Ovary (tissue), 10 donors: ENCODE measurements at regions of chr1 and their contacts with region 1.

Region 1: DNA sequence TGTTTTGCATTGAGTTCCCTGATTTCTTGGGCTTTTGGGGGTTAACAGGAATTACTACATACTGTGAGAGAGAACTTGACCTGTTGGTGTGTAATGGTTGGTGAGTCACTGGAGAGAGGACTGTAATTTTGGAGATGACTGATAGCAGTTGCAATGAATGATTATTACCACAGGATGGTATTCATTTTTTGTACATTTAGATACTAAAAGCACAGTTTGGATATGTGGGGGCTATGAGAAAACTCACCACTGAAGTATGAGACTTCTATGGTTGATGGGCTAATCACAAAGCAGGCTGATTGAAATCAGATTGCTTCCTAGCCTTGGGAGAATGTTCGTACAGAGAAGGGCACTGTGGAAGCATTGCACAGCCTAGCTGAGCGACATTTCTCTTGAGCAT is 1571.3 kb upstream of the PRMT6 start:
- DNase-seq: no peak
- H3K4me3 ChIP-seq: no peak overlapping the region
- H3K27ac ChIP-seq: no peak overlapping the region
- H3K4me1 ChIP-seq: no peaks in the 10 kb centered on the region
- H3K27me3 ChIP-seq: no peaks in the 10 kb centered on the region
- CTCF ChIP-seq: no peak
- EP300 ChIP-seq: no peak
- POLR2A ChIP-seq: no peak

Region 2: DNA sequence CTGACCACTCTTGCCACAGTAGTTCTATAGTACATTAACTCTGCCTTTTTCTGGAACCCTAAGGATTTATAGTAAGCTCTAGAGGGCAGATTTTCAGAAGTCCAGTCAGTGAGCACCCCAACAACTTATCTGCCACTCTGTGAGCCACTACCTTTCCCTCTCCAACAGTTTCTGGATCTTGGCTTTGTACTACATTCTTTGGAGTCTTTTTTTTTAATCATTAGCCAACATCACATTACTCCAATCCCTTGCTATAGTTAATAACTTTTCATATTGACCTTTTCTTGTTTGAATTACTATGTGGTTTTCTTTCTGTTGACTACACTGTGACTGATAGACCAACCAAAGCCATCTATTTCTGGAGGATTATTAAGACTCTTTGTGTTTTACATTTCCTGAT is 25.4 kb before region 1 on chr1:
- intact Hi-C with region 1: loop called in 1 of 4 experiments (anchors 1 kb)
- DNase-seq: no peak
- H3K4me3 ChIP-seq: no peak overlapping the region
- H3K27ac ChIP-seq: no peak overlapping the region
- H3K4me1 ChIP-seq: no peaks in the 10 kb centered on the region
- H3K27me3 ChIP-seq: no peaks in the 10 kb centered on the region
- CTCF ChIP-seq: no peak
- EP300 ChIP-seq: no peak
- POLR2A ChIP-seq: no peak

Region 3: GRCh38 chr1:105565006-105565405 is 79.8 kb after region 1 on chr1:
- intact Hi-C with region 1: loop called in 1 of 4 experiments (anchors 10 kb)
- DNase-seq: no peak
- H3K4me3 ChIP-seq: no peak overlapping the region
- H3K27ac ChIP-seq: no peak overlapping the region
- H3K4me1 ChIP-seq: no peaks in the 10 kb centered on the region
- H3K27me3 ChIP-seq: no peaks in the 10 kb centered on the region
- CTCF ChIP-seq: no peak
- EP300 ChIP-seq: no peak
- POLR2A ChIP-seq: no peak

Region 4: DNA sequence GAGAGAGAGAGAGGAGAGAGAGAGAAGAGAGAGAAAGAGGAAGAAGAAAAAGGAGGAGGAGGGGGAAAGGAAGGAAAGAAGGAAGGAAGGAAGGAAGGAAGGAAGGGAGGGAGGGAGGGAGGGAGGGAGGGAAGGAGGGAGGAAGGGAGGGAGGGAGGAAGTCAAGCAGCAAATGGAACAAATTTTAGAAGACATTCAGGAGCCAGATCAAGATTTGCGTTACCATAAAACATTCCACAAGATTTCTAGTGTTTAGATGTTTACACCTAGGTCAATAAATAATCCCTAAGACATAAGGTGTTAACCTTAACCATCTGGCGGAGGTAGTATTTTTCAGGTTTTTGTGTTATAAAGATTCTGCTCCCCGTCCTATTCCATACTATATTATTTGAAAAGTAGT is 251.1 kb after region 1 on chr1:
- intact Hi-C with region 1: no loop called
- DNase-seq: no peak
- H3K4me3 ChIP-seq: no peak overlapping the region
- H3K27ac ChIP-seq: no peak overlapping the region
- H3K4me1 ChIP-seq: no peaks in the 10 kb centered on the region
- H3K27me3 ChIP-seq: no peaks in the 10 kb centered on the region
- CTCF ChIP-seq: no peak
- EP300 ChIP-seq: no peak
- POLR2A ChIP-seq: no peak